ENCODE measurements at regions of chr7 and their contacts with region 1.

Region 1: GRCh38 chr7:134140889-134141867 is 14.0 kb downstream of the LRGUK start:
- DNase-seq: peak; percentile 69
- H3K4me3 ChIP-seq: no peak overlapping the region
- H3K27ac ChIP-seq: no peak overlapping the region
- H3K4me1 ChIP-seq: no peaks in the 10 kb centered on the region
- CTCF ChIP-seq: peak; percentile 94

Region 2: DNA sequence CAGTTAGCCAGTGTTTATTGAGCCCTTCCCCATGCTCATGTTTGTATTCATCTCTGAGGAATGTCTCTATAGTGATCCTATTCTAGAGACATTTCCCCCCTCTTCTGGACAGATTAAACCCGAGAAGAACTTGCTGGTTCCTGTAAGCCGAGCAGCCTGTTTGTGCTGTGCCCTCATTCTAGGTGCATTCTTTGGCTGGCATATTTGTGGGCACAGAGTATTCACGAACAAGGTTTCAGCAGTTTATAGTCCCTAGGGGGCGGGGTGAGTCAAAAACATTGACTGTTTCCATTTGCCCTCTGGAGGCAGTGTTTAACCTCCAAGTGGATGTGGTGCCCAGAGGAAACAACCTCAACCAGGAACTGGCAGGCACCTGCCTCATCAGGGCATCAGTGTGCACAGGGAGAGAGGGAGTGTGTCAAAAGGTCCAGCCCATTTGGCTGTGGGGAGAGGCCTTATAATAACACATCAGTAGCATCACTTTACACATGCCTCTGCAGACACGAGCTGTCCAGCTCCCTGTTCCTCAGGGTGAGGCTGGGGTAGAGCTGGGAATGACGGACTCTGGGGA is 287.4 kb before region 1 on chr7:
- CTCF ChIA-PET with region 1: no interaction called
- POLR2A ChIA-PET with region 1: no interaction called
- intact Hi-C with region 1: loop called (anchors 5 kb)
- DNase-seq: peak; percentile 63
- H3K4me3 ChIP-seq: no peak overlapping the region
- H3K27ac ChIP-seq: no peak overlapping the region
- H3K4me1 ChIP-seq: no peaks in the 10 kb centered on the region
- CTCF ChIP-seq: peak; percentile 79

Region 3: GRCh38 chr7:134024739-134025138 is 116.4 kb before region 1 on chr7:
- CTCF ChIA-PET with region 1: interaction called, 6 read pairs
- POLR2A ChIA-PET with region 1: interaction called, 3 read pairs
- intact Hi-C with region 1: loop called (anchors 5 kb)
- DNase-seq: no peak
- H3K4me3 ChIP-seq: no peak overlapping the region
- H3K27ac ChIP-seq: no peak overlapping the region
- H3K4me1 ChIP-seq: no peaks in the 10 kb centered on the region
- CTCF ChIP-seq: no peak

Region 4: DNA sequence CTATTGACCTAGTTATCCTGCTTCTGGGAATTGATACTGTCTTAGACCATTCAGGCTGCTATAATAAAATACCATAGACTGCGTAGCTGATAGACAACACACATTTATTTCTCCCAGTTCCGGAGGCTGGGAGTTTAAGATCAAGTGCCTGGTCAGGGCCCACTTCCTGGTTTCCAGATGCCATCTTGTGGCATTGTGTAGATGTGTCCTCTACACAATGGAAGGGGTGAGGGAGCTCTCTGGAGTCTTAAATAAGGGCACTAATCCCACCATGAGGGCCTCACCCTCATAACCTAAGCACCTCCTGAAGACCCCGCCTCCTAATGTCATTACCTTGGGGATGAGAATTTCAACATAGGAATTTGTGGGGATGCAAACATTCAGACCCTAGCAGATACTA is 113.1 kb after region 1 on chr7:
- CTCF ChIA-PET with region 1: no interaction called
- POLR2A ChIA-PET with region 1: no interaction called
- intact Hi-C with region 1: loop called (anchors 5 kb)
- DNase-seq: peak; percentile 48
- H3K4me3 ChIP-seq: no peak overlapping the region
- H3K27ac ChIP-seq: no peak overlapping the region
- H3K4me1 ChIP-seq: no peaks in the 10 kb centered on the region
- CTCF ChIP-seq: peak; percentile 73

Region 5: GRCh38 chr7:134359787-134360432 is 218.7 kb after region 1 on chr7:
- CTCF ChIA-PET with region 1: no interaction called
- POLR2A ChIA-PET with region 1: no interaction called
- intact Hi-C with region 1: loop called (anchors 2 kb)
- DNase-seq: no peak
- H3K4me3 ChIP-seq: no peak overlapping the region
- H3K27ac ChIP-seq: no peak overlapping the region
- H3K4me1 ChIP-seq: no peaks in the 10 kb centered on the region
- CTCF ChIP-seq: no peak

Region 6: DNA sequence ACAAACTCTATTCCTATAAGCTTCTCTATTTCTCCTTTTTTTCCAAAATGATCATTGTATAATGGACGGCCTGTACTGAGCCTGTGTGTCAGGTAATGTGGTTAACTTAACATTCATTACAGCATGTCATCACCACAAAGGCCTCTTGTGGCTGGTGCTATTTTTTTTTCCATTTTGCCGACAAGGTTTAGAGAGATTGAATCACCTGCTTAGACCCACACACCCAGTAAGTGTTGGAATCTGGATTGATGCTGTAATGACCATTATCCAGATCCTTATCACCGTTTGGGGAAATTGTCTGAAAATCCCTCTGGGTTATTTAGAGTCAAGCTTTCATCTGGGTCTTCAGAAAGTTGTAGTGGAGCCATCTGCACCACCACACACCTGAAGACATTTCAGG is 426.2 kb after region 1 on chr7:
- CTCF ChIA-PET with region 1: no interaction called
- POLR2A ChIA-PET with region 1: no interaction called
- intact Hi-C with region 1: no loop called
- DNase-seq: no peak
- H3K4me3 ChIP-seq: no peak overlapping the region
- H3K27ac ChIP-seq: no peak overlapping the region
- H3K4me1 ChIP-seq: no peaks in the 10 kb centered on the region
- CTCF ChIP-seq: no peak